ENCODE measurements at regions of chr7 and their contacts with region 1.

Region 1: DNA sequence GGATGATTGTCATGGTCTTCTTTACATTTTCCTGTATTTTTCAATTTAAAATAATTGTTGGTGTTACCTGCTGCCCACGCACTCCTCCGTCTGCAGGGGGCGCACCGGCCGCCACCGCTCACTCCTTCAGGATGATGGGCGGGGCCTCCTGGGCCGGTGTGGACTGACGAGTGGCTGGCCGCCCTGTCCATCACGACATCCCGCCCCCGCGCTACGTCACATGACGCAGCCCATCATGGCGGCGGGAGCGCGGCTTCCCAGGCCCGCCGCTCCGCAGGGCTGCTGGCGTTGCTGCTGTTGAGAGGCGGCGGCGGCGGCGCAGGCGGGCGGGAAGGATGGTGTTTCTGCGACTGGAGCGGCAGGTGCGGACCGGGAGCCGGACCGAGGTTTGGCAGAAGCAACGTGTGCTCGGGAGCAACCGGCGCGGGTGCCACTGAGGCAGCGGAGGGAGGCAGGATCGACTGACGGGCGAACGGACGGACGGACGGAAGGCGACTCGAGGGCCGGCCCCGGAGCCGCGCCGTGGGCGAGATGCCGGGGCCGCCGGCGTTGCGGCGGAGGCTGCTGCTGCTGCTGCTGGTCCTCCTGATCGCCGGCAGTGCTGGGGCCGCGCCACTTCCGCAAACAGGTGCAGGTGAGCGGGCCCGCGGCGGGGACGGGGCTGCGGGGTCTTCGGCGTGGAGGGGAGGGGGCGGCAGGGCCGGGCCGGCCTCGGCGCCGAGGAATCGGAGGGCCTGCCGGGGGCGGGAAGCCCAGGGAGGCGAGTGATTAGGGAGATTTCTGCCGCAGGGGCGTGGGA is at the start of gene LMTK2:
- DNase-seq: peak; percentile 92 to 98
- H3K4me3 ChIP-seq: peak within 1 kb of the TSS; percentile 99
- H3K4me3 Mint-ChIP-seq: peak within 1 kb of the TSS; percentile 91
- H3K27ac Mint-ChIP-seq: peak within 1 kb of the TSS; percentile 23
- H3K4me1 ChIP-seq: peaks cover 27% of the 10 kb centered on the region
- H3K4me1 Mint-ChIP-seq: peaks cover 7% of the 10 kb centered on the region
- H3K27me3 ChIP-seq: no peaks in the 10 kb centered on the region
- H3K27me3 Mint-ChIP-seq: no peaks in the 10 kb centered on the region
- CTCF ChIP-seq: peak; percentile 89 to 90
- total RNA-seq, gene LMTK2: 21.9 and 22.3 TPM in 2 replicates

Region 2: GRCh38 chr7:98021588-98022351 is 85.1 kb before region 1 on chr7:
- CTCF ChIA-PET with region 1: interaction called, 4 read pairs
- POLR2A ChIA-PET with region 1: no interaction called
- intact Hi-C with region 1: loop called (anchors 1 kb)
- DNase-seq: peak; percentile 69 to 88
- H3K4me3 ChIP-seq: no peak overlapping the region
- H3K4me3 Mint-ChIP-seq: no peak overlapping the region
- H3K27ac Mint-ChIP-seq: no peak overlapping the region
- H3K4me1 ChIP-seq: no peaks in the 10 kb centered on the region
- H3K4me1 Mint-ChIP-seq: no peaks in the 10 kb centered on the region
- H3K27me3 ChIP-seq: no peaks in the 10 kb centered on the region
- H3K27me3 Mint-ChIP-seq: peaks cover 2% of the 10 kb centered on the region
- CTCF ChIP-seq: peak; percentile 92 to 93

Region 3: DNA sequence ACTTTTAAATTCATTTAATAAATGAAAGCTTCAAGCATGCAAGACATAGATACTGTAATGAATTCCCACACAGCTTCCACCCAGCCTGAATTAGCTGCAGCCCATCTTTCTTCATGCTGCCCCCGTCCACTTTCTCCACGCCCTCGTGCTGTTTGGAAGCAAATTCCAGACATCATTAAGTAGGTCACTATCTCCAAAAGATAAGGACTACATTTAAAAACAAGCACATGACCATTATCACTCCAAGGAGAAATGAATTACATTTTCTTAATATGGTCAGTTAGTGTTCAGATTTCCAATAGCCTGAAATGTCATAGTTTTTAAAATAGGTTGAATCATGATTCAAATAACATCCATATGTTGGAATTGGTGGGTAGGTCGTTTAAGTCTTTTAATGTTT is 24.1 kb after region 1 on chr7:
- CTCF ChIA-PET with region 1: interaction called, 9 read pairs
- POLR2A ChIA-PET with region 1: interaction called, 7 read pairs
- intact Hi-C with region 1: loop called (anchors 1 kb)
- DNase-seq: no peak
- H3K4me3 ChIP-seq: no peak overlapping the region
- H3K4me3 Mint-ChIP-seq: peak overlapping the region; percentile 26
- H3K27ac Mint-ChIP-seq: peak overlapping the region; percentile 33
- H3K4me1 ChIP-seq: peaks cover 40% of the 10 kb centered on the region
- H3K4me1 Mint-ChIP-seq: peaks cover 32% of the 10 kb centered on the region
- H3K27me3 ChIP-seq: no peaks in the 10 kb centered on the region
- H3K27me3 Mint-ChIP-seq: no peaks in the 10 kb centered on the region
- CTCF ChIP-seq: no peak

Region 4: GRCh38 chr7:98149116-98149692 is 42.4 kb after region 1 on chr7:
- CTCF ChIA-PET with region 1: no interaction called
- POLR2A ChIA-PET with region 1: no interaction called
- intact Hi-C with region 1: no loop called
- DNase-seq: no peak
- H3K4me3 ChIP-seq: no peak overlapping the region
- H3K4me3 Mint-ChIP-seq: no peak overlapping the region
- H3K27ac Mint-ChIP-seq: no peak overlapping the region
- H3K4me1 ChIP-seq: peaks cover 5% of the 10 kb centered on the region; the same call in 1 of the 2 replicates
- H3K4me1 Mint-ChIP-seq: no peaks in the 10 kb centered on the region
- H3K27me3 ChIP-seq: no peaks in the 10 kb centered on the region
- H3K27me3 Mint-ChIP-seq: no peaks in the 10 kb centered on the region
- CTCF ChIP-seq: no peak

Measured in Caco-2 (cell line).